IMR-90 (cell line): ENCODE measurements at regions of chr12 and their contacts with region 1.

Region 1: DNA sequence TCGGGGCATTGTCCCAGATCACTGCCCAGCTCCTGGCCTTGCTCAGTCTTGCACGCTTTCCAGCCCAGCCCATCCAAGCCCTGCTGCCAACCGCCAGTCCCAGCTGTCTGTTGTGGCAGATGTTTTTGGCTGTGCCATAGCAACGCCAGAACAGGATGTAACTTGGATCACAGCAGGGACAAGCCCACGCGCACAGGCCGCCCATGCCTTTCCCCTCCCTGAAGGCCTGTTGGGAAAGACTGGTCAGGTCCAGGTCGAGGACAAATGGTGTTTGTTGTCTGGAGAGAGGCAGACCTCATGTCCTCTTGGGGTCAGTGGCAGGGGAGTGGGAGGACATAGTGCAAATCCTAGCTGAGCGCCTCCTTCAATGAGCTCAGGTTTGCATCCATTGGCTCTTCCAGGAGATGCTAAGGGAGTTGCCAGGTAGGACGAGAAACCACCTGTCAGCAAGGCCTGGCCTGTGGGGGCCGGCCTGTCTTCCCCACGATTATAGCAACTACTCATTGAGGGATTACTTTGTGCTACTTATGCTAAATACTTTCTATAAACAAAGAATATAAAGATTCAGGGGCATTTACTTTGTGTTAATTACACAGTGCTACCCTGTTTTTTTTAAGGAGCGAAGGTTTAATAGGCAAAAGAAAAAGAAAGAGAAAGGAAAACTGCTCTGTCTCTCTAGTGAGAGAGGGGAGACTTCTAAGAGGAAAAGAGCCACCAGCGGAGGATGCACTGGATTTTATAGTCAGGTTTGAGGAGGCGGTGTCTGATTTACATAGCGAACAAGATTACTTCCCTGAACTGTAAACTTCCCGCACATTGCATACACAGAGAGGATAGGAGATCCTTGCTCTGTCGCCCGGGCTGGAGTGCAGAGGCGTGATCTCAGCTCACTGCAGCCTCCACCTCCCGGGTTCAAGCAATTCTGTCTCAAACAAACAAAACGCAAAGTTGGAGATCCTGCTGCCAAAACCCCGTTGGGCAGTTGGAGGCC is 42.8 kb upstream of the CORO1C start:
- DNase-seq: peak; percentile 68
- ATAC-seq: peak; percentile 77
- H3K4me3 ChIP-seq: no peak overlapping the region
- H3K27ac ChIP-seq: no peak overlapping the region
- H3K4me1 ChIP-seq: peaks cover 6% of the 10 kb centered on the region; the same call in 1 of the 2 replicates
- H3K27me3 ChIP-seq: no peaks in the 10 kb centered on the region
- CTCF ChIP-seq: no peak
- POLR2A ChIP-seq: no peak
- RAD21 ChIP-seq: no peak

Region 2: DNA sequence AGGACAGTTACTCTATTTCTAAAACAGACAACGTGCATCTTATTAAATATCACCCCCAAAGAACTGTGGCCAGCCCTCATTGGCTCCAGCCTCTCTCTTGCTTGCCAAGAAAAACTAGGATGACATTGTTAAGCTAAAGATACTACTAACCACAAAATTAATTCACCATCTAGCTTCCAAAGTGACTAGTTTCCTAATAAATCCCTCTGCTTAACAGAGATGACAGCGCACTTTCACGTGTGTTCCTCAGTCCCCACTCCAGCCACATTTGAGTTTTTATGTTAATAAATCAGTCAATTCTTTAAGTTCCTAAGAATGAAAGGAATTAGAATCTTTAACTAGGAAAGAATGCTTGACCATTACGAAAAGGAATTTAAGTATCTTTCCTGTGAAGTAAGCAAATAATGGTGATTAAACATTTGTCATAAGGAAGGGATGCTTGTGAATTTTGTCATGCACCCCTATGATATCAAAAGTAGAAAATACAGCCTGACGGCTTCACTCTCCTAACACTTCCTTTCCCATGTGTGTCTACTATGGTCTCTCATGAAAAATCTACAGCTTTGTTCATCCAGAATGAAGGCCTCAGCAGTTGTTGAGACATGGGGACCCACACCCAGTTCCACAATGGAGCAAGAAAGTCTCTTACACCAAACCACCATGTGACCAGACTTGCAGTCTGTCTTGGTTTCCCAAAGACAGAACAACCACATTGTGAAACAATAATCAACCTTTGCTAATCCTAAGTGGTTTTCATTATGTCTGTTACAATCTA is 50.9 kb before region 1 on chr12:
- CTCF ChIA-PET with region 1: no interaction called
- POLR2A ChIA-PET with region 1: no interaction called
- dilution Hi-C with region 1: no loop called
- in situ Hi-C with region 1: no loop called
- intact Hi-C with region 1: no loop called
- DNase-seq: peak; percentile 95
- ATAC-seq: peak; percentile 61
- H3K4me3 ChIP-seq: peak overlapping the region; percentile 2; the same call in 1 of the 2 replicates
- H3K27ac ChIP-seq: peak overlapping the region; percentile 98
- H3K4me1 ChIP-seq: peaks cover 36% of the 10 kb centered on the region
- H3K27me3 ChIP-seq: no peaks in the 10 kb centered on the region
- CTCF ChIP-seq: no peak
- POLR2A ChIP-seq: peak; percentile 54; the same call in 1 of the 2 replicates
- RAD21 ChIP-seq: no peak

Region 3: GRCh38 chr12:108738170-108738569 is 35.9 kb before region 1 on chr12:
- CTCF ChIA-PET with region 1: no interaction called
- POLR2A ChIA-PET with region 1: no interaction called
- dilution Hi-C with region 1: no loop called
- in situ Hi-C with region 1: loop called (anchors 5 kb)
- intact Hi-C with region 1: no loop called
- DNase-seq: no peak
- ATAC-seq: no peak
- H3K4me3 ChIP-seq: no peak overlapping the region
- H3K27ac ChIP-seq: no peak overlapping the region
- H3K4me1 ChIP-seq: no peaks in the 10 kb centered on the region
- H3K27me3 ChIP-seq: no peaks in the 10 kb centered on the region
- CTCF ChIP-seq: no peak
- POLR2A ChIP-seq: no peak
- RAD21 ChIP-seq: no peak

Region 4: GRCh38 chr12:108989376-108989775 is 215.3 kb after region 1 on chr12:
- CTCF ChIA-PET with region 1: no interaction called
- POLR2A ChIA-PET with region 1: no interaction called
- dilution Hi-C with region 1: no loop called
- in situ Hi-C with region 1: no loop called
- intact Hi-C with region 1: no loop called
- DNase-seq: no peak
- ATAC-seq: no peak
- H3K4me3 ChIP-seq: no peak overlapping the region
- H3K27ac ChIP-seq: no peak overlapping the region
- H3K4me1 ChIP-seq: no peaks in the 10 kb centered on the region
- H3K27me3 ChIP-seq: 0 out of 2 replicates have a peak, but pooled peaks cover 2% of the 10 kb centered on the region
- CTCF ChIP-seq: no peak
- POLR2A ChIP-seq: no peak
- RAD21 ChIP-seq: no peak